Cardiac septum (tissue), 1 donor: ENCODE measurements at regions of chr20 and their contacts with region 1.

Region 1: DNA sequence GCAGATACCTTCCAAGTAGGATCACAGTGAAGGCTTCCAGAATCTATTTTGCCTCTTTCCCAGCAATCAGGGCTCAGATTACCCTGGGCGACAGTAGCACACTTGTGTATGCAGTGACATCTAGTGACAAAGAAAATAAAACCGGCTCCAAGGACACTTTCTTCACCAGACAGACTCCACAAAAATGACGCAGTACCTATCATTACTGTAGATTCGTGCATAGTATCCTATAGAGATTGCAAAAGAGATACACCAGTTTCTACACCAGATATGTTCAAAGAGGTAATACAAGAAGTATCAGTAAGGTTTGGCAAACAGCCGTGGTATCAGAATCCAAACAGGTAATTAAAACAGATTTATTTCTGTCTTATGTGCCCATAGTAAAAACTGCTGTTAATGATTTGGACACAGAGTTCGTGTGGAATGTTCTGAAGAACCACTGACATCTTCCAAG is 600.4 kb upstream of the JAG1 start:
- DNase-seq: no peak

Region 2: GRCh38 chr20:10434467-10434831 is 839.7 kb before region 1 on chr20:
- intact Hi-C with region 1: loop called (anchors 10 kb)
- DNase-seq: peak; percentile 94

Region 3: GRCh38 chr20:10553326-10553984 is 720.7 kb before region 1 on chr20:
- intact Hi-C with region 1: loop called (anchors 2 kb)
- DNase-seq: no peak